Esophagus squamous epithelium (tissue), 5 donors: ENCODE measurements at regions of chr15 and their contacts with region 1.

Region 1: DNA sequence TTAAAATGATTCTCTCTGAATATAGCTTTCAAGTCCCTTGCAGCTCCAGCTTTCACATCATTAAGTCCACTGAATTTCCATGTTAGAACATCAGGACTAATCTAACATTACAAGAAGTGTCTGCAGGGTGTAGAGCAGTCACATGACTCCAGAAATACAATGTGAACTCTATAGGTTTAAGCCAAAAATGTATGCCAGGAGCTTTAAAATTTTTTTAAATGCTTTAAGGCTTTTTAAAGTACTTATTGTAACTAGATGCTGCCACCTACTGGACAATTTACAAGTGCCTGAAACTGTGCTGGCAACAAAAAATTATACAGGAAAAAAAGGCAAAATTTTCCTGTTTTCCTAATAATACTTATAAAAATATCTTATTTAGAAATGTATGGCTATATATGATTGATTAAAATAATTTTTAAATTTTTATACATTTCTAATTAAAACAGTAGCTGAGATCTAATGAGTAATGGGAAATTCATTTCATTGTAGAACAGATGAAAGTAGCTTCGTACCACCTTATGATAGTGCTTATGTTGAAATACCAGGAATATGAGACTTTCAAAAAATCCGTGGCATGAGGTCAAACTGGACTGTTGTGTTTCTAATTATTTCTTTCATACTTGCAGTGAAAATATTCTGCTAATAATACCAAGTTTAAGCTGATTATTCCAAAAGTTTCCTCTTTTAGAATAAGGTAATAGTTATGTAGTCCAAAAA is 25.7 kb downstream of the FSIP1 start:
- DNase-seq: no peak
- H3K4me3 ChIP-seq: no peak overlapping the region
- H3K27ac ChIP-seq: no peak overlapping the region
- H3K4me1 ChIP-seq: no peaks in the 10 kb centered on the region
- H3K27me3 ChIP-seq: no peaks in the 10 kb centered on the region
- CTCF ChIP-seq: peak; percentile 48 to 89 (median 84)
- POLR2A ChIP-seq: no peak

Region 2: GRCh38 chr15:38817427-38818156 is 939.4 kb before region 1 on chr15:
- intact Hi-C with region 1: loop called (anchors 5 kb)
- DNase-seq: peak; percentile 3
- H3K4me3 ChIP-seq: peak overlapping the region in 1 of 4 donors; percentile 29
- H3K27ac ChIP-seq: no peak overlapping the region
- H3K4me1 ChIP-seq: peaks cover 0 to 12% (median 0%) of the 10 kb centered on the region in 3 donors
- H3K27me3 ChIP-seq: no peaks in the 10 kb centered on the region
- CTCF ChIP-seq: peak; percentile 80 to 99 (median 99)
- POLR2A ChIP-seq: no peak

Region 3: GRCh38 chr15:39624806-39625205 is 132.2 kb before region 1 on chr15:
- intact Hi-C with region 1: no loop called
- DNase-seq: no peak
- H3K4me3 ChIP-seq: no peak overlapping the region
- H3K27ac ChIP-seq: peak overlapping the region; percentile 35 to 85 (median 76)
- H3K4me1 ChIP-seq: peaks cover 15 to 50% (median 28%) of the 10 kb centered on the region in 3 donors
- H3K27me3 ChIP-seq: no peaks in the 10 kb centered on the region
- CTCF ChIP-seq: peak in 1 of 6 experiments; percentile 11
- POLR2A ChIP-seq: peak in 1 of 4 donors; percentile 17

Region 4: GRCh38 chr15:39692356-39693327 is 64.3 kb before region 1 on chr15:
- intact Hi-C with region 1: loop called (anchors 5 kb)
- DNase-seq: no peak
- H3K4me3 ChIP-seq: peak overlapping the region in 1 of 4 donors; percentile 1
- H3K27ac ChIP-seq: peak overlapping the region in 3 of 4 donors; percentile 45 to 59 (median 57)
- H3K4me1 ChIP-seq: peaks cover 3 to 22% (median 9%) of the 10 kb centered on the region in 3 donors
- H3K27me3 ChIP-seq: no peaks in the 10 kb centered on the region
- CTCF ChIP-seq: no peak
- POLR2A ChIP-seq: no peak

Region 5: GRCh38 chr15:40421246-40422157 is 664.5 kb after region 1 on chr15:
- intact Hi-C with region 1: no loop called
- DNase-seq: no peak
- H3K4me3 ChIP-seq: peak overlapping the region in 1 of 4 donors; percentile 37
- H3K27ac ChIP-seq: no peak overlapping the region
- H3K4me1 ChIP-seq: peaks cover 11 to 24% (median 18%) of the 10 kb centered on the region in 3 donors
- H3K27me3 ChIP-seq: no peaks in the 10 kb centered on the region
- CTCF ChIP-seq: peak; percentile 68 to 98 (median 92)
- POLR2A ChIP-seq: no peak